ENCODE measurements at regions of chr6 and their contacts with region 1.

Region 1: GRCh38 chr6:149846321-149846720 is 17.8 kb downstream of the LRP11 start:
- DNase-seq: no peak
- ATAC-seq: no peak
- H3K4me3 Mint-ChIP-seq: no peak overlapping the region
- H3K27ac Mint-ChIP-seq: no peak overlapping the region
- H3K4me1 Mint-ChIP-seq: peaks cover 3% of the 10 kb centered on the region
- H3K27me3 Mint-ChIP-seq: peaks cover 4% of the 10 kb centered on the region

Region 2: DNA sequence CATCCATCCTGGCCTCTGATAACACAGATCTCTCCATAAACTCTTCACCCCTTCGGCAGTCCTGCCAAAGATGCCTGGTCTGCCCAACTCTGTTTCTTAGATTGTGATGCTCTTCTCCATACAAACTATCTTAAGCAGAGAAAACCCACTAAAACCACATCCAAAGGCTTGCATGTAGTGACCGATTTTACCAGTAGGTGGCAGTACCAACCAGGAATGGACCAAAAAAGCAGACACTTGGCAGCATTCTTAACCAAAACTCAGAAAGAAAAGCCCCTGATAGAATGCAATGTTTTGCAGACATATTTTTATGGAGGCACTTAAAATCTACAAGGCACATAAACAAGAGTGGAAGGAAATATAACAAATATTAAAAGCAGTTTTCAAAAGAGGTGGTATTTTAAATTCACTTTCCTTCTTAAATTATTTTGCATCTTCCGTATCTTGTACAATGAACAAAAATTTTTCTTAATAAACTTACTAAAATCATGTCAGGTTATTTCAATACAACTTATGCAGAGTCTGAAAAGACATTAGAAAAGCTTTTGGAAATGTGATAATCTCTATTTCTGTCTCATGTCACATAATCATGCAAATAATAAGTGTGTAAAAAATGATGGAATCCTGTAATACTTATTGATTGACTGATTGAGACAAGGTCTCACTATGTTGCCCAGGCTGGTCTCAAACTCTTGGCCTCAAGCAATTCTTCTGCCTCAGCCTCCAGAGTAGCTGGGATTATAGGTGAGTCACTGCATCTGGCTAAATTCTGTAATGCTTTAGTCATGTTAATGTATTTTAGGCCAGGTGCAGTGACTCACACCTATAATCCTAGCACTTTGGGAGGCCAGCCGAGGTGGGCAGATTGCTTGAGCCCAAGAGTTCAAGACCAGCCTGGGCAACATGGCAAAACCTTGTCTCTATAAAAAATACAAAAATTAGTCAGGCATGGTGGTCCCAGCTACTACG is 11.5 kb before region 1 on chr6:
- CTCF ChIA-PET with region 1: interaction called, 12 read pairs
- POLR2A ChIA-PET with region 1: interaction called, 4 read pairs
- intact Hi-C with region 1: no loop called
- DNase-seq: peak; percentile 78
- ATAC-seq: peak; percentile 66
- H3K4me3 Mint-ChIP-seq: no peak overlapping the region
- H3K27ac Mint-ChIP-seq: no peak overlapping the region
- H3K4me1 Mint-ChIP-seq: no peaks in the 10 kb centered on the region
- H3K27me3 Mint-ChIP-seq: no peaks in the 10 kb centered on the region

Region 3: DNA sequence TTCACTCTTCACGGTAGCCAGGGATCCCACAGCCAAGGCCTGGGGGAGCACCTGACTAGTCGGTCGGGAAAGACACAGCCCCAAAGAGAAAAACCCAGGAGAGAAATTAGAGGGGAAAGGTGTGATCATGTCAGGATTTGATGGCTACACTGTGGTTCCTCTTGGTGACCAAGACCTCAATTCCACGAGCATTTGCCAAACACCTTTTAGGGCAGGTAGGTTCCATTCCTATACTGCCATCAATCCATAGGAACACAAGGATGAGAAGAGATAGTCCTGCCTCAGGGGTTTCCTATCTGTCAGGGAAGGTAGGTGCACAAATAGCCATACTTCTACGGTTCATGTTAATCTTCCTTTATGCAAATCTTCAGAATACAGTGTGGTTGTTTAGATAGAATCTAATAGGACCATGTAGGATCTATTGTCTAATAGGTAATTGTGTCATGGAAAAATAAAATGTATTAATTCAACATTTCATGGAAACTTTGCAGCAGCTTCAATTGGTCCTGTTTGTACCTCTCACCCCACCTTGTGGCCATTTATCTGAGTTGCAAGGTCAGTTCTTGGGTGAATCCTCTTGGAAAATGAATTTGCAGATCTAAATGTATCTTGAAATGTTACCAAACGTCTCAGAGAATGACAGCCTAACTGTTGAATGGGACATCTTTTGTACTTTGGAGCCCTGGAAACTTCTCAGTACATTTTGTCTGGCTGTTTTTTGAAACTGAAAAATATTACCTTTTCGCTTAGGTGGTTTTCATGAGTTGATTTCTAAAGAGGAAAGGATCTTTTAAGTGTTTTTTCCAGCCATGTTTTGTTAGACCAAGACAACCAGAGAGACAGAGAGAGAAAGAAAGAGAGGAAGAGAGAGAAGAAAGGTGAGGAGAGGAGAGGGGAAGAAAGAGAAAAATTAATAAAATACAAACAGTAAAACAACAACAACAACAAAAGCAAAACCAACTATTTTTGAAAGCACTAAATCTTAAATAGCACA is 488.8 kb after region 1 on chr6:
- CTCF ChIA-PET with region 1: no interaction called
- POLR2A ChIA-PET with region 1: no interaction called
- intact Hi-C with region 1: no loop called
- DNase-seq: peak; percentile 61
- ATAC-seq: no peak
- H3K4me3 Mint-ChIP-seq: no peak overlapping the region
- H3K27ac Mint-ChIP-seq: no peak overlapping the region
- H3K4me1 Mint-ChIP-seq: no peaks in the 10 kb centered on the region
- H3K27me3 Mint-ChIP-seq: peaks cover 11% of the 10 kb centered on the region